ENCODE measurements at regions of chr3 and their contacts with region 1.

Region 1: GRCh38 chr3:170357176-170357919 is at the start of gene SKIL:
- DNase-seq: peak; percentile 98 to 99 (median 99)
- ATAC-seq: peak; percentile 73 to 88 (median 86)
- H3K4me3 ChIP-seq: peak within 1 kb of the TSS; percentile 64 to 99 (median 98)
- H3K27ac ChIP-seq: peak within 1 kb of the TSS; percentile 95 to 100 (median 99)
- H3K4me1 ChIP-seq: peaks cover 0 to 65% (median 33%) of the 10 kb centered on the region in 12 donors
- H3K27me3 ChIP-seq: no peaks in the 10 kb centered on the region
- CTCF ChIP-seq: peak in 7 of 12 donors; percentile 9 to 37 (median 21)
- POLR2A ChIP-seq: peak in 1 of 2 donors; percentile 86
- total RNA-seq, gene SKIL: 12.8 to 33.6 (median 25.4) TPM

Region 2: DNA sequence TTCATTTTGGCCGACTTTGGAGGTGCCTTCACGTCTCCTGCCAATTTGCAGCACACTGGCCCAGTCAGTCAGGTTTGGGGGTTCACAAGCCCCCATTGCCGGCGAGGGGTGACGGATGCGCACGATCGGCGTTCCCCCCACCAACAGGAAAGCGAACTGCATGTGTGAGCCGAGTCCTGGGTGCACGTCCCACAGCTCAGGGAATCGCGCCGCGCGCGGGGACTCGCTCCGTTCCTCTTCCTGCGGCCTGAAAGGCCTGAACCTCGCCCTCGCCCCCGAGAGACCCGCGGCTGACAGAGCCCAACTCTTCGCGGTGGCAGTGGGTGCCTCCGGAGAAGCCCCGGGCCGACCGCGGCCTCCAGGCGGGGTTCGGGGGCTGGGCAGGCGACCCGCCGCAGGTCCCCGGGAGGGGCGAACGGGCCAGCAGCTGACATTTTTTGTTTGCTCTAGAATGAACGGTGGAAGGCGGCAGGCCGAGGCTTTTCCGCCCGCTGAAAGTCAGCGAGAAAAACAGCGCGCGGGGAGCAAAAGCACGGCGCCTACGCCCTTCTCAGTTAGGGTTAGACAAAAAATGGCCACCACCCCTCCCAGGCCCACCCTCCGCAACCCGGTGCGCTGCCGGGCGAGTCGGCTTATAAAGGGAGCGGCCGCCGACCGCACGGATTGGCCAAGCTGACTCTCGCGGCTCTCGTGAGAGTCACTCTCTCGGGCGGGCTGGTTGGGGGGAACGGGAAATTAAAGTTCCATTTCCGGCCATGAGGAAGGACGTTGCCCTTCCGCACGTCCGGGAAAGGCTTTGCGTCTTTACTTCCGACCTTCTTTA is 592.7 kb before region 1 on chr3 and contains the start of gene TERC:
- intact Hi-C with region 1: loop called in 1 of 10 experiments (anchors 10 kb)
- DNase-seq: peak; percentile 94 to 97 (median 95)
- ATAC-seq: peak; percentile 95 to 96 (median 96)
- H3K4me3 ChIP-seq: peak within 1 kb of the TSS; percentile 72 to 95 (median 84)
- H3K27ac ChIP-seq: peak within 1 kb of the TSS; percentile 95 to 100 (median 98)
- H3K4me1 ChIP-seq: peaks cover 0 to 12% (median 0%) of the 10 kb centered on the region in 12 donors
- H3K27me3 ChIP-seq: no peaks in the 10 kb centered on the region
- CTCF ChIP-seq: peak in 1 of 12 donors; percentile 5
- POLR2A ChIP-seq: peak; percentile 96 to 98
- total RNA-seq, gene TERC: 1.0 to 60.8 (median 3.1) TPM in 7 of 9 donors, not detected in the others

Region 3: GRCh38 chr3:170180908-170181879 is 176.2 kb before region 1 on chr3 and contains the start of gene PHC3:
- intact Hi-C with region 1: loop called in 1 of 10 experiments (anchors 10 kb)
- DNase-seq: peak; percentile 94 to 97 (median 95)
- ATAC-seq: peak; percentile 86 to 96 (median 95)
- H3K4me3 ChIP-seq: peak within 1 kb of the TSS; percentile 62 to 97 (median 90)
- H3K27ac ChIP-seq: peak within 1 kb of the TSS; percentile 82 to 99 (median 96)
- H3K4me1 ChIP-seq: peaks cover 0 to 26% (median 20%) of the 10 kb centered on the region in 12 donors
- H3K27me3 ChIP-seq: no peaks in the 10 kb centered on the region
- CTCF ChIP-seq: peak in 4 of 12 donors; percentile 14 to 48 (median 24)
- POLR2A ChIP-seq: peak in 1 of 2 donors; percentile 63
- total RNA-seq, gene PHC3: 29.9 to 83.8 (median 50.3) TPM

Region 4: GRCh38 chr3:170221924-170222646 is 135.3 kb before region 1 on chr3 and contains the start of gene PRKCI:
- intact Hi-C with region 1: loop called in 2 of 10 experiments (anchors 5 kb)
- DNase-seq: peak; percentile 95 to 98 (median 97)
- ATAC-seq: peak; percentile 99 to 100 (median 100)
- H3K4me3 ChIP-seq: peak within 1 kb of the TSS; percentile 73 to 99 (median 86)
- H3K27ac ChIP-seq: peak within 1 kb of the TSS; percentile 54 to 95 (median 89)
- H3K4me1 ChIP-seq: peaks cover 0 to 18% (median 9%) of the 10 kb centered on the region in 12 donors
- H3K27me3 ChIP-seq: no peaks in the 10 kb centered on the region
- CTCF ChIP-seq: no peak
- POLR2A ChIP-seq: peak in 1 of 2 donors; percentile 91
- total RNA-seq, gene PRKCI: 8.8 to 26.9 (median 14.1) TPM

Region 5: DNA sequence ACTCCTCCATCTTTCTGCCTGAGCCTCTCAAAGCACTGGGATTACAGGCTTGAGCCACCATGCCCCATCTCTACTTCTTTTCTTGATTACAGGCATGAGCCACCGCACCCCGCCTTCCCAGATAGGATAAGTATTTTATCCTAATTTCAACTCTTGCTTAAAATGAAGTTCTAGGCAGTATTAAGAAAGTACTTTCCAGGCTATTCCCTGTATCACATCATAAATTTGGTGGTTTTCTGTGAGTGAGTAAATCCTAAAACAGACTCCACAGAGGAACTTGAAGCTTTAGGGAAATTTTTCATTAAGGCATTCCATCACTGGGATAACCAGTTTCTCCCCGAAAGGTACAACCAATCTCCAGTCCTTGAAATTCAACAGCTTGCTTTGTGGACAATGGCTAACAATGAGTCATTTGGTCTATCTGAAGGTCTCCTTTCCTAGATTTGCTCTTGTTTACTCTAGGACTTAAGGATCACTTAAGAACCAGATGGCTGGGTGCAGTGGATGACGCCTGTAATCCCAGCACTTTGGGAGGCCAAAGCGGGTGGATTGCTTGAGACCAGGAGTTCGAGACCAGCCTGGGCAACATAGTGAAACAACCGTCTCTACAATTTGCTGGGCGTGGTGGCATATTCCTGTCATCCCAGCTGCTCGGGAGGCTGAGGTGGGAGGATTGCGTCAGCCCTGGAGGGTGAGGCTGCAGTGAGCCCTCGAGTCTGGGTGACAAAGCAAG is 49.5 kb before region 1 on chr3:
- intact Hi-C with region 1: loop called in 9 of 10 experiments (anchors 5 to 10 kb)
- DNase-seq: no peak
- ATAC-seq: no peak
- H3K4me3 ChIP-seq: no peak overlapping the region
- H3K27ac ChIP-seq: no peak overlapping the region
- H3K4me1 ChIP-seq: no peaks in the 10 kb centered on the region
- H3K27me3 ChIP-seq: no peaks in the 10 kb centered on the region
- CTCF ChIP-seq: no peak
- POLR2A ChIP-seq: no peak

Region 6: GRCh38 chr3:170679190-170679589 is 321.8 kb after region 1 on chr3:
- intact Hi-C with region 1: no loop called
- DNase-seq: no peak
- ATAC-seq: no peak
- H3K4me3 ChIP-seq: no peak overlapping the region
- H3K27ac ChIP-seq: no peak overlapping the region
- H3K4me1 ChIP-seq: no peaks in the 10 kb centered on the region
- H3K27me3 ChIP-seq: no peaks in the 10 kb centered on the region
- CTCF ChIP-seq: no peak
- POLR2A ChIP-seq: no peak

Measured in heart left ventricle (tissue), 16 donors.